ENCODE measurements at regions of chr7 and their contacts with region 1.

Region 1: GRCh38 chr7:149742075-149742701 is 31.2 kb downstream of the ZNF467 start:
- DNase-seq: peak; percentile 62 to 93
- ATAC-seq: peak; percentile 90 to 96
- H3K4me3 ChIP-seq: peak overlapping the region; percentile 44
- H3K27ac ChIP-seq: peak overlapping the region; percentile 53 to 69; a peak in 5 of 6 replicates
- H3K4me1 ChIP-seq: no peaks in the 10 kb centered on the region
- CTCF ChIP-seq: peak; percentile 91
- EP300 ChIP-seq: no peak
- POLR2A ChIP-seq: no peak
- RAD21 ChIP-seq: peak; percentile 81 to 86

Region 2: GRCh38 chr7:149624419-149625339 is 117.5 kb before region 1 on chr7:
- CTCF ChIA-PET with region 1: interaction called, 11 read pairs
- POLR2A ChIA-PET with region 1: no interaction called
- DNase-seq: peak; percentile 74 to 94
- ATAC-seq: peak; percentile 93 to 97
- H3K4me3 ChIP-seq: peak overlapping the region; percentile 98
- H3K27ac ChIP-seq: peak overlapping the region; percentile 94 to 97
- H3K4me1 ChIP-seq: peaks cover 12% of the 10 kb centered on the region
- CTCF ChIP-seq: peak; percentile 81
- EP300 ChIP-seq: no peak
- POLR2A ChIP-seq: peak; percentile 78
- RAD21 ChIP-seq: no peak; a peak in 1 of 5 replicates

Region 3: GRCh38 chr7:149670288-149670687 is 71.9 kb before region 1 on chr7:
- CTCF ChIA-PET with region 1: interaction called, 91 read pairs
- POLR2A ChIA-PET with region 1: no interaction called
- DNase-seq: no peak
- ATAC-seq: no peak
- H3K4me3 ChIP-seq: no peak overlapping the region
- H3K27ac ChIP-seq: no peak overlapping the region
- H3K4me1 ChIP-seq: no peaks in the 10 kb centered on the region
- CTCF ChIP-seq: no peak
- EP300 ChIP-seq: no peak
- POLR2A ChIP-seq: no peak
- RAD21 ChIP-seq: no peak

Region 4: GRCh38 chr7:149686002-149686401 is 56.2 kb before region 1 on chr7:
- CTCF ChIA-PET with region 1: interaction called, 13 read pairs
- POLR2A ChIA-PET with region 1: no interaction called
- DNase-seq: no peak
- ATAC-seq: no peak
- H3K4me3 ChIP-seq: no peak overlapping the region
- H3K27ac ChIP-seq: no peak overlapping the region
- H3K4me1 ChIP-seq: peaks cover 6% of the 10 kb centered on the region; the same call in 2 of the 3 replicates
- CTCF ChIP-seq: no peak
- EP300 ChIP-seq: no peak
- POLR2A ChIP-seq: no peak
- RAD21 ChIP-seq: no peak

Region 5: DNA sequence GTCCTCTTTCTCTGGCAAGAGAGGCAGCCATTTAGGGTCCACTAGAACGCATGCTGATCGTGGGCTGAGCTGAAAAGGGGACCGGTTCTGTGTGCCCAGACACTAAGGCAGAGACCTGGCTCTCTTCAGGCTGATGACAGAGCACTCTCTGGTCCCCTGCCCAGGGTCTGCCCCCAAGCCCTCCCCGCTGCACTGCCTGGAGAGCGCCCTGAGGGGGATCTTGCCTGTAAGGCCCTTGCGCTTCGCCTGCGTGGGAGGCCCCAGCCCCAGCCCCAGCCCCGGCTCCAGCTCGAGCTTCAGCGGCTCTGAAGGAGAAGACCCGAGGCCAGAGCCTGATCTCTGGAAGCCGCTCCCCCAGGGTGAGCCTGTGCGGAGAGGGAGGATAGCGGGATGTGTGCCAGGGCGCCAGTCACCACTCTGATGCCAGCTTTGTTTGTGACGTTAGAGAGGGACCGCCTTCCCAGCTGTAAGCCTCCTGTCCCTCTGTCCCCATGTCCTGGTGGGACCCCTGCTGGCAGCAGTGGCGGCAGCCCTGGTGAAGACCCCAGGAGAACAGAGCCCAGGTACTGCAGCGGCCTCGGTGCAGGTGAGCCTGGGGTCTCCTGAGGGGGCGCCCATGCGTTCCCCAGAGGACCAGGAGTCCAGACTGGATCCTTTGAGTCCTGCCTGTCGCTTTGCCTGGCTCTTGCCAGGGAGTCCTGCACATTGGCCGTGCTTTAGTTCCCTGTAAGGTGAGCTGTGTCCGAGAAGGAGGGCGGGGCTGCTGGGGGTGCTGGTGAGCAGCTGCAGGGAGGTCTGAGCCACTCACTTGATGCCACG is 12.0 kb before region 1 on chr7:
- CTCF ChIA-PET with region 1: interaction called, 22 read pairs
- POLR2A ChIA-PET with region 1: no interaction called
- DNase-seq: no peak
- ATAC-seq: no peak
- H3K4me3 ChIP-seq: no peak overlapping the region
- H3K27ac ChIP-seq: no peak overlapping the region
- H3K4me1 ChIP-seq: no peaks in the 10 kb centered on the region
- CTCF ChIP-seq: no peak
- EP300 ChIP-seq: no peak
- POLR2A ChIP-seq: no peak
- RAD21 ChIP-seq: no peak

Region 6: DNA sequence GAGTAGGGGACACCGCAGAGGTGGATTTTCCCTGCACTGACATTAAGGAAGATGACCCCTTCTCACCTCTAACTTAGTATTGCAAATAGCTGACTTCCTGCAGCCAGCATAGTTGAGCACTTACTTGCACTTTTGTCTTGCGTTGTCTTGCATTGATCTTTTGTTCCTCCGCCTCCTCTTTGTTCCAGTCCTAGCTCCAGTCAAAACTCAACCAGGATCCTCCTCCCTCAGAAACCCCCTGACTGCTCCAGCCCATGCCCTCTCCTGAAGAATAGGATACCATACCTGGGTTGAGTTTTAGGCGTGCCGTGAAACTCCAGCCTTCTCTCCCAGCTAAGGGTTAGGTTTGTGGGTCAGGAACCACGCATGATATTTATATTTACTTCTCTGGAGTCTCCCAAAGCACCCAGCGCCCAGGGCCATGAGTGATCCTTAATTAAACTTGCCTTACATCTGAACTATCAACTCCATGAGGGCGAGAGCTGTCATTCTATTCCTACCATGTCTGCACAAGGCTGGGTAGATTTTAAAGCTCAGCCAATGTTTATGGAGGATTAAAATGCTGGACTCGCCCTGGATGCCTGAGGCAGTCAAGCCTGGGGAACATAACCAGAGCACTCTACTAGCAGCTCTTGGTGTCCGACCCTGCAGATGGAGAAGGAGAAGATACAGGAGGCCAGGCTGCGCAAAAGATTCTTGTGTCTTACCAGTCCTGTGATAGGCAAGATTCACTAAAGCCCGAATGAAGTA is 17.1 kb after region 1 on chr7:
- CTCF ChIA-PET with region 1: interaction called, 16 read pairs
- POLR2A ChIA-PET with region 1: no interaction called
- DNase-seq: no peak
- ATAC-seq: no peak
- H3K4me3 ChIP-seq: no peak overlapping the region
- H3K27ac ChIP-seq: no peak overlapping the region
- H3K4me1 ChIP-seq: no peaks in the 10 kb centered on the region
- CTCF ChIP-seq: no peak
- EP300 ChIP-seq: no peak
- POLR2A ChIP-seq: no peak
- RAD21 ChIP-seq: no peak